Activated T-helper 1 cell treated with anti-CD3 and anti-CD28 coated beads, Interleukin-12 subunit alpha, Interleukin-12 subunit beta, Interleukin-2, Interleukin-4 antibody, amounts not matched to agents 30 ng/mL and 10 ng/mL and 1 ng/mL, durations not matched to agents 14 hours and 24 hours and 36 hours (primary cell): ENCODE measurements at regions of chr14 and their contacts with region 1.

Region 1: DNA sequence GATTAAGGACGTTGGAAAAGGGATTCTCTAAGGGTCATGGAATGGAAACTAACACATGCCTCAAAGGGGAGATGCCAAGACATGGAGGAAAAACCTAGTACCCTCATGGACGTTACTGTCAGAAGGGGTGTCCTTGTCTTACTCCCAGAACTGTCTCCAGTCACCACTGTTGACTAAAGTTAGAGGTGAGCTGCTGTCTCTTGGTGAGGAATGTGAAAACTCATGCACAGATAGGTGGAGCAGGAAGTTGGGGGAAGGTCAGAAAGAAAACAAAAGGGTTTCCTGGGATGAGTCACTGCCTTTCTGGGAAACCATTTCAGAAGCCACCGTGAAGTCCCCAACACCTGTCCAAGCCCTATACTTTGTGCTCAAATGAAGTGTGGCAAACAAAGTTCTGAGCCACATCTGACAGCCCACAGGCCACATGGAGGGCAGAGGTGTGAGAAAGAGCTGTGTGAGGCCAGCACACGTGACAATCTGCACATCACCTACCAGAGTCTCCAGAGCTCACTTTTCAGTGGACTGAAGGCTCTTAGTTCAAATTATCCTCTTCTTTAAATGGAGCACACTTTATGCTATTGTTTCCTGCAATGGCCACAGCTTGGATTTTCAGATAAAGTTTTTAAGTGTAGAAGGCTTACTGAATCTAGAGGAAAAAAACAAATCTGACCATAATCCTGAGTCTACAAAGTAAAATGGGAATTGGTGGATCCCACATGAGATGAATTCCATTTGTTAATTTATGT is 92.9 kb upstream of the EGLN3 start:
- DNase-seq: peak; percentile 91
- H3K4me3 Mint-ChIP-seq: peak overlapping the region; percentile 71
- H3K27ac Mint-ChIP-seq: peak overlapping the region; percentile 87
- H3K4me1 Mint-ChIP-seq: peaks cover 70% of the 10 kb centered on the region
- H3K27me3 Mint-ChIP-seq: no peaks in the 10 kb centered on the region

Region 2: GRCh38 chr14:33859306-33859705 is 184.5 kb before region 1 on chr14:
- intact Hi-C with region 1: loop called (anchors 5 kb)
- DNase-seq: no peak
- H3K4me3 Mint-ChIP-seq: no peak overlapping the region
- H3K27ac Mint-ChIP-seq: no peak overlapping the region
- H3K4me1 Mint-ChIP-seq: peaks cover 51% of the 10 kb centered on the region
- H3K27me3 Mint-ChIP-seq: peaks cover 14% of the 10 kb centered on the region

Region 3: DNA sequence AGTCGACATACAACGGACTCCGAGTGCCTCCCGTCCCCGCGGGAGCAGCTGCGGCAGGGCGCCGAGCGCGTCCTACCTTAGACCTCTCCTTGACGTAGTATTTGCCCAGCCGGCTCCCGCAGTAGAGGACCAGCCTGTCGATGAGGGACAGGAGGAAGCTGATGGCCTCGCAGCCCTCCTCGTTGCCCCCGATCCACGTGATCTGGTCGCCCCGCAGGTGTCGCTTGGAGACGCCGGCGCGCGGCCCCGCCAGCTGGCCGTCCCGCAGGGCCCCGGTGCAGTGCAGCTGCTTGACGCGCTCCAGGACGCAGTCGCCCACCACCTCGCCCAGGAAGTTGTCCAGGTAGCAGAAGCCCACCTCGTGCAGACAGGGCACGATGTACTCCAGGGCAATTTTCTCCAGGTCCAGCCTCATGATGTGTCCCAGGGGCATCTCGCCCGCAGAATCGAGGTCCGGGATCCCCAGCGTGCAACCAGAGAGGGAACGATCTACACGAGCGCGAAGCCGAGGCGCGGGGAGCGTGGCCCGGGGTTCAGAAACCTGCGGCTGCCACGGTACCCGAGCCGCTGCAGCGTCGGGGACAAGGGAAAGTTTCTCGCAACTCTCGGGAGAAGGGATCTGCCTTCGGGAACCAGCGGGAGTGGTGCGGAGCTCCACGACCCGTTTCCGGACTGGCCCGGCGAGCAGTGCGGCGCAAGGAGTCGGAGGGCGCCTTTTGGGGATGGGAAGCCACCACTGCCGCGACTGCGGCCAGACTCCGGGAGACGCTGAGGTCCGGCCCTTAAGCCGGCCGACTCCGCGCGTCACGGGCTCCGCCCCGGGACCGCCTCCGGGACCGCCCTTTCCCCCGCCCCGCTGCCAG is 93.2 kb before region 1 on chr14 and contains the start of gene EGLN3:
- intact Hi-C with region 1: loop called (anchors 1 kb)
- DNase-seq: peak; percentile 79
- H3K4me3 Mint-ChIP-seq: peak within 1 kb of the TSS; percentile 80
- H3K27ac Mint-ChIP-seq: peak within 1 kb of the TSS; percentile 70
- H3K4me1 Mint-ChIP-seq: peaks cover 44% of the 10 kb centered on the region
- H3K27me3 Mint-ChIP-seq: peaks cover 43% of the 10 kb centered on the region
- total RNA-seq, gene EGLN3: 8.7 and 11.2 TPM in 2 replicates

Region 4: DNA sequence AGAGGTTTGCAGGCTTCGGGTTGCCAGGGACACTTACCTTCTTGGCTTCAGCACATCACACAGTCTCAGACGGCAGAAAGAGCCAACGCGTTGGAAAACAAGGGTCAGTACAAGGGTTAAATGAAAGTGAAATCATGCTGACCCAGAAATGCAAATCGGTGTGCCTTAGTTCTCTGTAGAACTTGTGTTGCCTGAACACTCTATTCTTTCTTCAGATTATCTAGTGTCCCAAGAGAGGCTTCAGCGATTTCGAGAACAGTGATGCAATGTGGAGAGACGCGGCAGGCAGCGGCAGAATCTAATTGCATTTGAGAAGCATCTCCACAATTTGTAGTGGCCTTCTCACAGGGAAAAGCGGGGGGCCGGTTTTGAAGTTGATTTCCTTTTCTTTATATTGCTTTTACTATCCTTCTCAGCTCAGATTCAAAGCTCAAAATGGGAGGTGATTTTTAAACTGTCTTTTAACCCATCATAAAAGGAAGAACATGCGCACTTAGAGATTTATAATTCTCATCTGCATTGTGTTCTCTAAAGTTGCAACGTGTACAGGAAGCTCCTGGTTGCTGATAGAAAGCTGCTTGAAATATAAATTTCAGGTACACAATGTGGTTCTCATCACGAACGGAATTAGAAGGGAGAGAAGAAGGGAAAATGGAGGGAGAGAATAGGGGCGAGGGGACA is 25.1 kb before region 1 on chr14:
- intact Hi-C with region 1: loop called (anchors 1 kb)
- DNase-seq: peak; percentile 12
- H3K4me3 Mint-ChIP-seq: peak overlapping the region; percentile 80
- H3K27ac Mint-ChIP-seq: peak overlapping the region; percentile 92
- H3K4me1 Mint-ChIP-seq: peaks cover 36% of the 10 kb centered on the region
- H3K27me3 Mint-ChIP-seq: peaks cover 2% of the 10 kb centered on the region

Region 5: DNA sequence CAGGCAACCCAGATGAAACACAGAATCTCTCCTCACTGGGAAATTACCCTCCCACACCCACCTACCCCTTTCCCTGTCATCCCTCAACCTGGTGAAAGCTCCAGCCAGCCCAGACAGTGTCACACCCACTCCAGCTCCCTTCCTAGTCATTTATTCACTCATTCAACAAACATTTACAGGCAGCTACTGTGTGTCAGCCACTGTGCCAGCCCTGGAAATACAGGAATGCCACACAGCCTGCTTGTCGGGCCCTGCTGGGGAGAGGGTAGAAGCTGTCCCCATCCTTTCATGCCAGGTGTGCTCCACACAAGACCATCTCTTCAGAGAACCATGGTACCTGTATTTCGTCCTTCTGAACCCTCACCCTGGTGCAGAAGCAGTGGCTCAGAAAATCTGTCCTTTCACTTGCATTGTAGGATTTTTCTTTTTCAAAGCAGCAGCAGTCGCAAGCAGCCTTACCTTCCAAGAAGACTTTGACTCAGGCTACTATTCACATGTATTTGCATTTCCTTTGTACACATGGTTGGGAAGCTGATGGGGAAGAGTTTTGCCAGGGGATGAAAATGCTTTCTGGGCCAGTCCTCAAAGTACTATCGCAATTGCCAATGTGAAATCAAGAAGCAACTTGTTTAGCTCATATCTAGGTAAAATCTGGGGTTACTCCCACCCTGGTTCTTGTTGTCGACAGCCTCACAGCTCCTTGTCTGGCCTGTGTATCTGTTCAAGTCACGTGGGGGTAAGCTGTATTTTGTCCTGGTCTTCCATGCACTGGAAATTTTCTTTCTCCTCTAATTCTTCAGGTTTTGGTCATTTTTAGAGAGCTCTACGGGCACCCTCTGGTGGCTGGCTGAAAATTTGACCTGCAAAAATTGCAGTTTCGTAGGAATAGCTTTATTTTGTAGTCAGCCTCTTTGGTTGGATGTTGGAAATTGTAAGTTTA is 54.5 kb after region 1 on chr14:
- intact Hi-C with region 1: loop called (anchors 10 kb)
- DNase-seq: peak; percentile 21
- H3K4me3 Mint-ChIP-seq: no peak overlapping the region
- H3K27ac Mint-ChIP-seq: no peak overlapping the region
- H3K4me1 Mint-ChIP-seq: peaks cover 61% of the 10 kb centered on the region
- H3K27me3 Mint-ChIP-seq: peaks cover 3% of the 10 kb centered on the region

Region 6: GRCh38 chr14:34227834-34228649 is 184.2 kb after region 1 on chr14:
- intact Hi-C with region 1: loop called (anchors 5 kb)
- DNase-seq: peak; percentile 45
- H3K4me3 Mint-ChIP-seq: peak overlapping the region; percentile 40
- H3K27ac Mint-ChIP-seq: no peak overlapping the region
- H3K4me1 Mint-ChIP-seq: peaks cover 16% of the 10 kb centered on the region
- H3K27me3 Mint-ChIP-seq: peaks cover 16% of the 10 kb centered on the region